ENCODE measurements at regions of chr17 and their contacts with region 1.

Region 1: GRCh38 chr17:57892146-57892828 is 42.4 kb upstream of the MRPS23 start:
- DNase-seq: peak; percentile 62 to 72 (median 66)
- H3K4me3 ChIP-seq: no peak overlapping the region
- H3K4me3 Mint-ChIP-seq: no peak overlapping the region
- H3K27ac ChIP-seq: no peak overlapping the region
- H3K27ac Mint-ChIP-seq: no peak overlapping the region
- H3K4me1 ChIP-seq: no peaks in the 10 kb centered on the region
- H3K4me1 Mint-ChIP-seq: peaks cover 2 to 7% (median 5%) of the 10 kb centered on the region in 4 donors
- H3K27me3 ChIP-seq: no peaks in the 10 kb centered on the region
- H3K27me3 Mint-ChIP-seq: peaks cover 0 to 6% of the 10 kb centered on the region in 2 donors

Region 2: DNA sequence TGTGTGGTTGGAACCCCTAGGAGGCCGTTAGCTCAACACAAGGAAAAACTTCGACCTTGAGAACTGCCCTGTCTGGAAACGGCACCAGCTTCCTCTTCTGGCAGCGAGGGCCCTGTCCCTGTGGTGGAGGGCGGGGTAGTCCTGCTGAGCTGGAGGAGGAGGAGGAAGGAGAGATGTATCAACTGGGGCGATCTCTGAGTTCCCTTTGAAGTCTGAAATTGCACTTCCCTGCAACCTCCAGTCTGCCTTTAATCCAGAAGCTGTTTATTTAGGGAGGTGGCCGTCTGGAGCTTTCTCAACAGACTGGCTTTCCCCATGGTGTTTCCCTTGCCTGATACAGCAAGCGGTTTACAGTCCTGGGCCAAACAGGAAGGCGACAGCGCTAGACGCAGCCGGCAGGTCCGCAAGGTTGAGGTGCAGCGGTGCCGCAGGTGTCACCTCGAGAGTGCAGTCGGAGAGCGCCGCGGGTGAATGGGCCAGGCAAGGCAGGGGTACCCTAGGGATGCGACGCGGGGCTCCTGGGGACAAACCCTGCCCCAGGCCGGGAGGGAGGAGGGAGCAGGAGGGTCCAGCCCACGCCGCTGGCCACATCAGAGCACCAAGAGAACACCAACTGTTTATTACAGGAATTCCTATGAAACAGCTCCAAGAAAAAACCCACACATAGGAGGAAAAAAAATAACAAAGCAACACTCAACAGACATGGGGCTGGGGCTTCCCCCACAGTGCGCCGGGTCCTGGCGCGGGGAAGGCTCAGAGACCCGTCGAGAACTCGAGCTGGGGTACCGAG is 31.1 kb before region 1 on chr17:
- CTCF ChIA-PET with region 1: interaction called, 15 read pairs
- POLR2A ChIA-PET with region 1: no interaction called
- intact Hi-C with region 1: no loop called
- DNase-seq: peak; percentile 25 to 61 (median 32)
- H3K4me3 ChIP-seq: peak overlapping the region; percentile 52 to 66
- H3K4me3 Mint-ChIP-seq: peak overlapping the region; percentile 82 to 96 (median 86)
- H3K27ac ChIP-seq: no peak overlapping the region
- H3K27ac Mint-ChIP-seq: peak overlapping the region; percentile 13 to 75 (median 71)
- H3K4me1 ChIP-seq: peaks cover 13% of the 10 kb centered on the region
- H3K4me1 Mint-ChIP-seq: peaks cover 9 to 20% (median 14%) of the 10 kb centered on the region in 4 donors
- H3K27me3 ChIP-seq: no peaks in the 10 kb centered on the region
- H3K27me3 Mint-ChIP-seq: peaks cover 4 to 8% of the 10 kb centered on the region in 2 donors

Region 3: DNA sequence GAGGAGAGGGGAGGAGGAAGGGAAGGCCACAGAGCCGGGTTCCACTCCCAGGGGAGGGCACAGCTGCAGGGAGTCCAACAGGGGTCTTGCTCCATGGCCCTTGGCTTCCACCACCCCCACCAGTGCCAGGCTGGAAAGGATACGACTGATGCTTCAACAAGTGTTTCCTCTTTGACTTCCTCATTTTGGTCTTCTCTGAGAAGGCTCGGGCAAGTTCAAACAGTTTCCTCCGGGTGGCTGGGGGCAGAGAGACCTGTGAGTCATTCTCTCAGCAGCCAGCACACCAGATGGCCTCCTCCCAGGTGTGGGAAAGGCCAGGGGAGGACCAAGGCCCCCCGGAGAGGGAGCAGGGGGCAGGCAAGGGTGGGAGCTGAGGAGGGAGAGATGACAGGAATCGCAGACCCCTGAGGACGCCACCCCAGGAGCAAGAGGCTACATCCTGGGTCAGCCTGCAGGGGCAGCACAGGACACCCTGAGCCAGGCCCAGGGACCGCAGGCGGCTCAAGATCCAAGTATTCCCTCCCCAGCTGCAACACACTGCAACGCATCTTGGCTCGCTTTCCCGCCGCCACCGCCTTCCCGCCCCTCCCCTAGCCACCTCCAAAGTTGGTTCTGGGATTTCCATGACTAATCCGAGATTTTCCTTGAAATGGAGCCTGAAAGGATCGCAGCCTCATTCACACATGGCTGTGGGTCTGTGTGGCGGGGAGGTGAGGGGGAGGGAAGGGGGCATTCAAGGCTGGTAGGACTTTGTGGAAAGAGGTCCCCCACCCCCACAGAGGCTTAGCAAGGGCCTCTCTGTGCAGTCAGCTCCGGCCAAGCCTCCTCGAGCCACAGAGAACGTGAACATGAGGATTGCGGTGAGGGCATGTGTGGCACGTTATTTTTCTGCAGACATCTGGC is 24.0 kb before region 1 on chr17:
- CTCF ChIA-PET with region 1: interaction called, 10 read pairs
- POLR2A ChIA-PET with region 1: no interaction called
- intact Hi-C with region 1: no loop called
- DNase-seq: no peak
- H3K4me3 ChIP-seq: no peak overlapping the region
- H3K4me3 Mint-ChIP-seq: no peak overlapping the region
- H3K27ac ChIP-seq: no peak overlapping the region
- H3K27ac Mint-ChIP-seq: peak overlapping the region in 1 of 7 donors; percentile 86
- H3K4me1 ChIP-seq: peaks cover 11% of the 10 kb centered on the region
- H3K4me1 Mint-ChIP-seq: peaks cover 2 to 17% (median 8%) of the 10 kb centered on the region in 4 donors
- H3K27me3 ChIP-seq: no peaks in the 10 kb centered on the region
- H3K27me3 Mint-ChIP-seq: peaks cover 2 to 6% of the 10 kb centered on the region in 2 donors

Region 4: GRCh38 chr17:57946798-57947358 is 54.6 kb after region 1 on chr17:
- CTCF ChIA-PET with region 1: interaction called, 6 read pairs
- POLR2A ChIA-PET with region 1: no interaction called
- intact Hi-C with region 1: loop called (anchors 5 kb)
- DNase-seq: peak; percentile 21 to 52 (median 29)
- H3K4me3 ChIP-seq: peak overlapping the region in 1 of 2 donors; percentile 42
- H3K4me3 Mint-ChIP-seq: peak overlapping the region; percentile 86 to 99 (median 92)
- H3K27ac ChIP-seq: no peak overlapping the region
- H3K27ac Mint-ChIP-seq: peak overlapping the region; percentile 3 to 93 (median 53)
- H3K4me1 ChIP-seq: peaks cover 18% of the 10 kb centered on the region
- H3K4me1 Mint-ChIP-seq: peaks cover 17 to 37% (median 20%) of the 10 kb centered on the region in 4 donors
- H3K27me3 ChIP-seq: no peaks in the 10 kb centered on the region
- H3K27me3 Mint-ChIP-seq: peaks cover 0 to 2% of the 10 kb centered on the region in 2 donors

Region 5: DNA sequence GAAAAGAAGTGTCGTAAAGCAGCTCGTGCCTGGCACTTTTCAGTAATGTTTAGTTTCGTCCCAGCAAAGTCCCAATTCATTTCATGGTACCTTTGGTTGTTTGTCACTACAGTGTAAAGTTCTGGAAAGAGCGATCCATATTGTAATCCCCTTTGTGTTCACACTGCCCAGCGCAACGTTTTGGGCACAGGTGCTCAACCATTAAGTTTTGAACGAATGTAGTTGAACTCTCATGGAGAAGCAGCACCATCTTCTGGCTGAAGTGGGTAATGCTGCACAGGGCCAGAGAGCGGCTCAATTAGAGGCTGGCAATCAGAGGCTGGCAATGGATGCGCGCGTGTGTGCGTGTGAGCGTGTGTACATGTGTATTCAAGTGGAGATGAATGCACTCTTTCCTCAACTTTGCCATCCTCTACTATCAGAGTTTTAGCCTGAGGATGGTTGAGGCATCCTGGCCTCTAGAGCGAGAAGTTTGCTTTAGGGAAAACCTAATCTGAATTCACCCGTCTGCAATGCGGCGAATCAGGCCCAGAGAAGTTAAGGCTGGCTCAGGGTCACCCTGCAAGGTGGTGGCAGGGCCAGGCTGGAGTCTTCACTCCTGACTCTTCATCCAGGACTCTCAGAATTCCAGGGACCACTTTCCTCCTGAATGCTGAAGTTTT is 220.8 kb after region 1 on chr17:
- CTCF ChIA-PET with region 1: interaction called, 45 read pairs
- POLR2A ChIA-PET with region 1: no interaction called
- intact Hi-C with region 1: loop called (anchors 1 kb)
- DNase-seq: peak; percentile 77 to 81 (median 79)
- H3K4me3 ChIP-seq: no peak overlapping the region
- H3K4me3 Mint-ChIP-seq: no peak overlapping the region
- H3K27ac ChIP-seq: no peak overlapping the region
- H3K27ac Mint-ChIP-seq: peak overlapping the region in 2 of 7 donors; percentile 14 to 69
- H3K4me1 ChIP-seq: no peaks in the 10 kb centered on the region
- H3K4me1 Mint-ChIP-seq: peaks cover 0 to 4% (median 2%) of the 10 kb centered on the region in 4 donors
- H3K27me3 ChIP-seq: no peaks in the 10 kb centered on the region
- H3K27me3 Mint-ChIP-seq: peaks cover 3 to 8% of the 10 kb centered on the region in 2 donors

Region 6: GRCh38 chr17:58172369-58173071 is 280.2 kb after region 1 on chr17:
- CTCF ChIA-PET with region 1: interaction called, 4 read pairs
- POLR2A ChIA-PET with region 1: no interaction called
- intact Hi-C with region 1: loop called (anchors 1 kb)
- DNase-seq: peak; percentile 62 to 72 (median 66)
- H3K4me3 ChIP-seq: no peak overlapping the region
- H3K4me3 Mint-ChIP-seq: peak overlapping the region; percentile 16 to 69 (median 51)
- H3K27ac ChIP-seq: no peak overlapping the region
- H3K27ac Mint-ChIP-seq: peak overlapping the region in 6 of 7 donors; percentile 15 to 92 (median 89)
- H3K4me1 ChIP-seq: peaks cover 47% of the 10 kb centered on the region
- H3K4me1 Mint-ChIP-seq: peaks cover 40 to 50% (median 44%) of the 10 kb centered on the region in 4 donors
- H3K27me3 ChIP-seq: no peaks in the 10 kb centered on the region
- H3K27me3 Mint-ChIP-seq: peaks cover under 1% of the 10 kb centered on the region in 2 donors